Caco-2 (cell line): ENCODE measurements at regions of chr11 and their contacts with region 1.

Region 1: GRCh38 chr11:32385998-32386397 is 49.3 kb downstream of the WT1 start:
- DNase-seq: peak; percentile 54
- H3K4me3 ChIP-seq: no peak overlapping the region
- H3K4me3 Mint-ChIP-seq: no peak overlapping the region
- H3K27ac Mint-ChIP-seq: no peak overlapping the region
- H3K4me1 ChIP-seq: no peaks in the 10 kb centered on the region
- H3K4me1 Mint-ChIP-seq: no peaks in the 10 kb centered on the region
- H3K27me3 ChIP-seq: peaks cover 1% of the 10 kb centered on the region
- H3K27me3 Mint-ChIP-seq: no peaks in the 10 kb centered on the region
- CTCF ChIP-seq: peak; percentile 54 to 84

Region 2: GRCh38 chr11:32323814-32324130 is 62.2 kb before region 1 on chr11:
- CTCF ChIA-PET with region 1: interaction called, 11 read pairs
- POLR2A ChIA-PET with region 1: no interaction called
- intact Hi-C with region 1: no loop called
- DNase-seq: no peak
- H3K4me3 ChIP-seq: no peak overlapping the region
- H3K4me3 Mint-ChIP-seq: no peak overlapping the region
- H3K27ac Mint-ChIP-seq: no peak overlapping the region
- H3K4me1 ChIP-seq: no peaks in the 10 kb centered on the region
- H3K4me1 Mint-ChIP-seq: no peaks in the 10 kb centered on the region
- H3K27me3 ChIP-seq: no peaks in the 10 kb centered on the region
- H3K27me3 Mint-ChIP-seq: peaks cover 6% of the 10 kb centered on the region
- CTCF ChIP-seq: peak in 1 of 2 experiments; percentile 16

Region 3: GRCh38 chr11:32333320-32333991 is 52.5 kb before region 1 on chr11:
- CTCF ChIA-PET with region 1: no interaction called
- POLR2A ChIA-PET with region 1: interaction called, 12 read pairs
- intact Hi-C with region 1: no loop called
- DNase-seq: no peak
- H3K4me3 ChIP-seq: no peak overlapping the region
- H3K4me3 Mint-ChIP-seq: no peak overlapping the region
- H3K27ac Mint-ChIP-seq: no peak overlapping the region
- H3K4me1 ChIP-seq: peaks cover 8% of the 10 kb centered on the region
- H3K4me1 Mint-ChIP-seq: no peaks in the 10 kb centered on the region
- H3K27me3 ChIP-seq: no peaks in the 10 kb centered on the region
- H3K27me3 Mint-ChIP-seq: no peaks in the 10 kb centered on the region
- CTCF ChIP-seq: no peak

Region 4: GRCh38 chr11:32411942-32412615 is 26.1 kb after region 1 on chr11:
- CTCF ChIA-PET with region 1: no interaction called
- POLR2A ChIA-PET with region 1: no interaction called
- intact Hi-C with region 1: no loop called
- DNase-seq: no peak
- H3K4me3 ChIP-seq: no peak overlapping the region
- H3K4me3 Mint-ChIP-seq: no peak overlapping the region
- H3K27ac Mint-ChIP-seq: no peak overlapping the region
- H3K4me1 ChIP-seq: no peaks in the 10 kb centered on the region
- H3K4me1 Mint-ChIP-seq: no peaks in the 10 kb centered on the region
- H3K27me3 ChIP-seq: no peaks in the 10 kb centered on the region
- H3K27me3 Mint-ChIP-seq: no peaks in the 10 kb centered on the region
- CTCF ChIP-seq: no peak

Region 5: GRCh38 chr11:32448232-32448631 is 62.2 kb after region 1 on chr11:
- CTCF ChIA-PET with region 1: interaction called, 3 read pairs
- POLR2A ChIA-PET with region 1: no interaction called
- intact Hi-C with region 1: loop called (anchors 5 kb)
- DNase-seq: peak in 1 of 2 experiments; percentile 56
- H3K4me3 ChIP-seq: no peak overlapping the region
- H3K4me3 Mint-ChIP-seq: no peak overlapping the region
- H3K27ac Mint-ChIP-seq: no peak overlapping the region
- H3K4me1 ChIP-seq: peaks cover 4% of the 10 kb centered on the region
- H3K4me1 Mint-ChIP-seq: peaks cover 7% of the 10 kb centered on the region
- H3K27me3 ChIP-seq: no peaks in the 10 kb centered on the region; the same call in 1 of the 2 replicates
- H3K27me3 Mint-ChIP-seq: peaks cover 8% of the 10 kb centered on the region
- CTCF ChIP-seq: peak; percentile 32 to 49

Region 6: GRCh38 chr11:32615422-32615821 is 229.4 kb after region 1 on chr11:
- CTCF ChIA-PET with region 1: no interaction called
- POLR2A ChIA-PET with region 1: no interaction called
- intact Hi-C with region 1: loop called (anchors 1 kb)
- DNase-seq: no peak
- H3K4me3 ChIP-seq: no peak overlapping the region
- H3K4me3 Mint-ChIP-seq: no peak overlapping the region
- H3K27ac Mint-ChIP-seq: no peak overlapping the region
- H3K4me1 ChIP-seq: peaks cover 8% of the 10 kb centered on the region; the same call in 1 of the 2 replicates
- H3K4me1 Mint-ChIP-seq: peaks cover 14% of the 10 kb centered on the region
- H3K27me3 ChIP-seq: no peaks in the 10 kb centered on the region
- H3K27me3 Mint-ChIP-seq: no peaks in the 10 kb centered on the region
- CTCF ChIP-seq: peak in 1 of 2 experiments; percentile 29